Naive thymus-derived CD8-positive, alpha-beta T cell (primary cell): ENCODE measurements at regions of chr20 and their contacts with region 1.

Region 1: DNA sequence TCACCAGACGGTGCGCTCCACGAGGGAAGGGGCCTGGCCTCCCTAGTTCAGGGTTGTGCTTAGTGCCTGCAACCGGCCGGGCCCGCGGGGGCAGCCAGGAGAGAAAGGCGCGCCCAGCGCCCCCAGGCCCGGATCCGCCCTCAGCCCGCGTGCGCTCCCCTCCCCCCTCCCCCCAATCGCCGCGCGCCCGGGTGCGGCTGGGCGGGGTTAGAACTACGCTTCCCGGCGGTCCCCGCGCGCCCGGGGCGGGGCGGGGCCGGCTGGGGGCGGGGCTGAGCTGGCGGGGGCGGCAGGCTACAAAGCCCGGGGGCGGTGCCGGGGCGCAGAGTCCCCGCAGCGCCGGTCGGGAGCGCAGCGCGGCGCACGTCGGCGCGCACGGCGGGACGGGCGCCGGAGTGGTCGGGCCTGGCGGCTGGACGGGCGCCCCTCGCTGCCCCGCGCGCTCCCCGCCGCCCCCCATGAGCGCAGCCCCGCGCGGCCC is at the start of gene RBM38:
- DNase-seq: peak; percentile 53 to 81 (median 75)
- ATAC-seq: peak; percentile 48 to 49
- H3K4me3 Mint-ChIP-seq: peak within 1 kb of the TSS; percentile 88 to 99 (median 97)
- H3K27ac Mint-ChIP-seq: peak within 1 kb of the TSS; percentile 93 to 100 (median 98)
- H3K4me1 Mint-ChIP-seq: peaks cover 24 to 54% (median 51%) of the 10 kb centered on the region in 4 donors
- H3K27me3 Mint-ChIP-seq: no peaks in the 10 kb centered on the region
- polyA plus RNA-seq, gene RBM38: 48.9 to 153 (median 69.0) TPM

Region 2: GRCh38 chr20:57409672-57410397 is 18.7 kb after region 1 on chr20:
- POLR2A ChIA-PET with region 1: interaction called, 218 read pairs
- DNase-seq: peak in 1 of 10 donors; percentile 28
- ATAC-seq: peak in 1 of 2 donors; percentile 2
- H3K4me3 Mint-ChIP-seq: peak overlapping the region in 4 of 10 donors; percentile 12 to 53 (median 50)
- H3K27ac Mint-ChIP-seq: peak overlapping the region in 6 of 10 donors; percentile 11 to 96 (median 64)
- H3K4me1 Mint-ChIP-seq: peaks cover 21 to 50% (median 46%) of the 10 kb centered on the region in 4 donors
- H3K27me3 Mint-ChIP-seq: no peaks in the 10 kb centered on the region

Region 3: GRCh38 chr20:57432874-57433491 is 41.9 kb after region 1 on chr20:
- POLR2A ChIA-PET with region 1: interaction called, 152 read pairs
- DNase-seq: peak; percentile 40 to 86 (median 64)
- ATAC-seq: peak; percentile 87 to 88
- H3K4me3 Mint-ChIP-seq: peak overlapping the region; percentile 57 to 88 (median 80)
- H3K27ac Mint-ChIP-seq: peak overlapping the region; percentile 66 to 94 (median 90)
- H3K4me1 Mint-ChIP-seq: peaks cover 39 to 77% (median 63%) of the 10 kb centered on the region in 4 donors
- H3K27me3 Mint-ChIP-seq: no peaks in the 10 kb centered on the region

Region 4: GRCh38 chr20:57450419-57450818 is 59.3 kb after region 1 on chr20:
- POLR2A ChIA-PET with region 1: interaction called, 11 read pairs
- DNase-seq: peak in 4 of 10 donors; percentile 20 to 40 (median 37)
- ATAC-seq: peak; percentile 65 to 74
- H3K4me3 Mint-ChIP-seq: peak overlapping the region; percentile 59 to 81 (median 67)
- H3K27ac Mint-ChIP-seq: peak overlapping the region; percentile 52 to 93 (median 80)
- H3K4me1 Mint-ChIP-seq: peaks cover 42 to 51% (median 49%) of the 10 kb centered on the region in 4 donors
- H3K27me3 Mint-ChIP-seq: peaks cover 0 to 3% (median 0%) of the 10 kb centered on the region in 5 donors

Region 5: GRCh38 chr20:57480444-57481160 is 89.5 kb after region 1 on chr20:
- POLR2A ChIA-PET with region 1: interaction called, 13 read pairs
- DNase-seq: peak; percentile 18 to 81 (median 50)
- ATAC-seq: peak; percentile 88 to 91
- H3K4me3 Mint-ChIP-seq: peak overlapping the region; percentile 53 to 85 (median 75)
- H3K27ac Mint-ChIP-seq: peak overlapping the region; percentile 66 to 92 (median 84)
- H3K4me1 Mint-ChIP-seq: peaks cover 13 to 65% (median 38%) of the 10 kb centered on the region in 4 donors
- H3K27me3 Mint-ChIP-seq: peaks cover 0 to 2% (median 0%) of the 10 kb centered on the region in 5 donors

Region 6: GRCh38 chr20:57622579-57623377 is 231.7 kb after region 1 on chr20:
- POLR2A ChIA-PET with region 1: interaction called, 26 read pairs
- DNase-seq: peak; percentile 50 to 84 (median 62)
- ATAC-seq: peak; percentile 9 to 15
- H3K4me3 Mint-ChIP-seq: peak overlapping the region in 8 of 10 donors; percentile 14 to 89 (median 56)
- H3K27ac Mint-ChIP-seq: peak overlapping the region; percentile 60 to 90 (median 79)
- H3K4me1 Mint-ChIP-seq: peaks cover 34 to 93% (median 82%) of the 10 kb centered on the region in 4 donors
- H3K27me3 Mint-ChIP-seq: no peaks in the 10 kb centered on the region

Region 7: DNA sequence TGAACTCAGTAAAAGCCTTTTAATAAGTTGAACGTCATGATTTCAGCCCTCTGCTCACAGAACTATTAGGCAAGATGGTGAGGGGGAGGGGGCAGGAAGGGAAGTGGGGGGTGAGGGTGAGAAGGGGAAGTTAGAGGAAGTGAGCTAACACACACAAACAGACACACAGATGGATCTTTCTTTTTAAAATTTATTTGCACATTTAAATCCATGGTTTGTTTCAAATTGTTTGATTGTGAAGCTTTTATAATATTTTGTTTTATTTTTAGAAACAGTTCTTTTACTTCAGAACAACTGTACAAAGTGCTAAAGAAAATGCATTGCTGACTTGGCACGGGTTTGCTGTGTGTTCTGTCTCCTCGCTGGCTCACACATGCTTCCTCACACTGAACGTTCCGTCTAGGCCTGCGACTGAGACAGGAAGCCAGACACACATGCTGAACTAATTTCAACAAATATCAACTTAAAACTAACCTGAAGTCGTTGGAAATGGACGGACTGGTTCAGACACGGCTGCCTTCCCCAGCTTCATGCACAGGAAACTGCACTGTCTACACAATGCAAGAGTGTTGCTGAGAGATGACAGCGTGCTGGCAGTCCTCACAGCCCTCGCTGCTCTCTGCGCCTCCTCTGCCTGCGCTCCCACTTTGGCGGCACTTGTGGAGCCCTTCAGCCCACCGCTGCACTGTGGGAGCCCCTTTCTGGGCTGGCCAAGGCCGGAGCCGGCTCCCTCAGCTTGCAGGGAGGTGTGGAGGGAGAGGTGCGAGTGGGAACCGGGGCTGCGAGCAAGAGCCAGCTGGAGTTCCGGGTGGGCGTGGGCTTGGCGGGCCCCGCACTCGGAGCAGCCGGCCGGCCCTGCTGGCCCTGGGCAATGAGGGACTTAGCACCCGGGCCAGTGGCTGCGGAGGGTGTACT is 237.2 kb after region 1 on chr20:
- POLR2A ChIA-PET with region 1: interaction called, 26 read pairs
- DNase-seq: peak in 9 of 10 donors; percentile 53 to 86 (median 59)
- ATAC-seq: peak; percentile 80 to 84
- H3K4me3 Mint-ChIP-seq: peak overlapping the region; percentile 77 to 96 (median 89)
- H3K27ac Mint-ChIP-seq: peak overlapping the region; percentile 93 to 99 (median 98)
- H3K4me1 Mint-ChIP-seq: peaks cover 31 to 86% (median 74%) of the 10 kb centered on the region in 4 donors
- H3K27me3 Mint-ChIP-seq: no peaks in the 10 kb centered on the region